ENCODE measurements at regions of chr11 and their contacts with region 1.

Region 1: GRCh38 chr11:3412837-3413236 is 33.9 kb upstream of the ZNF195 start:
- DNase-seq: no peak
- ATAC-seq: no peak
- H3K4me3 Mint-ChIP-seq: no peak overlapping the region
- H3K27ac Mint-ChIP-seq: no peak overlapping the region
- H3K4me1 Mint-ChIP-seq: peaks cover 2% of the 10 kb centered on the region
- H3K27me3 Mint-ChIP-seq: no peaks in the 10 kb centered on the region
- CTCF ChIP-seq: no peak

Region 2: DNA sequence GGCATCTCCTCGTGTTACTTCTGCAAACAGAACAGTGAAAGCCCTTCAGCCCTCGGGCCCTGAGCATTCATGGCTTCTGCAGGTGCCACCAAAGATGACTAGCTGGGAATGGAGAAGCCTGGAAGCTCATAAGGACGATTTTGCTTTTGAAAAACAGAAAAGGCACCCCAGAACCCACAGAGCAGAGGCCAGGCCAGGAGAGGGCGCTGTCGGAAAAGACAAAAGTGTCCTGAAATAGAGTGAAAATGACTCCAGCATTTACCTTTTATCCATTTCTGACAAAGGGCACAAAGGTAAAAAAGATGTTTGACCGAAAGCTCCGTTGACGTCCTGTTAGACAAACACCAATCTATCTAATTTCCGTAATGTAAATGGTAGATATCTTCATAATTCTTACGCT is 71.5 kb before region 1 on chr11:
- CTCF ChIA-PET with region 1: interaction called, 67 read pairs
- POLR2A ChIA-PET with region 1: no interaction called
- intact Hi-C with region 1: loop called (anchors 10 kb)
- DNase-seq: peak; percentile 88
- ATAC-seq: peak; percentile 56
- H3K4me3 Mint-ChIP-seq: no peak overlapping the region
- H3K27ac Mint-ChIP-seq: no peak overlapping the region
- H3K4me1 Mint-ChIP-seq: peaks cover 3% of the 10 kb centered on the region
- H3K27me3 Mint-ChIP-seq: peaks cover 30% of the 10 kb centered on the region
- CTCF ChIP-seq: peak; percentile 91

Region 3: GRCh38 chr11:3353066-3353465 is 59.8 kb before region 1 on chr11:
- CTCF ChIA-PET with region 1: interaction called, 16 read pairs
- POLR2A ChIA-PET with region 1: no interaction called
- intact Hi-C with region 1: loop called (anchors 10 kb)
- DNase-seq: no peak
- ATAC-seq: no peak
- H3K4me3 Mint-ChIP-seq: no peak overlapping the region
- H3K27ac Mint-ChIP-seq: no peak overlapping the region
- H3K4me1 Mint-ChIP-seq: no peaks in the 10 kb centered on the region
- H3K27me3 Mint-ChIP-seq: no peaks in the 10 kb centered on the region
- CTCF ChIP-seq: no peak